ENCODE measurements at regions of chr1 and their contacts with region 1.

Region 1: DNA sequence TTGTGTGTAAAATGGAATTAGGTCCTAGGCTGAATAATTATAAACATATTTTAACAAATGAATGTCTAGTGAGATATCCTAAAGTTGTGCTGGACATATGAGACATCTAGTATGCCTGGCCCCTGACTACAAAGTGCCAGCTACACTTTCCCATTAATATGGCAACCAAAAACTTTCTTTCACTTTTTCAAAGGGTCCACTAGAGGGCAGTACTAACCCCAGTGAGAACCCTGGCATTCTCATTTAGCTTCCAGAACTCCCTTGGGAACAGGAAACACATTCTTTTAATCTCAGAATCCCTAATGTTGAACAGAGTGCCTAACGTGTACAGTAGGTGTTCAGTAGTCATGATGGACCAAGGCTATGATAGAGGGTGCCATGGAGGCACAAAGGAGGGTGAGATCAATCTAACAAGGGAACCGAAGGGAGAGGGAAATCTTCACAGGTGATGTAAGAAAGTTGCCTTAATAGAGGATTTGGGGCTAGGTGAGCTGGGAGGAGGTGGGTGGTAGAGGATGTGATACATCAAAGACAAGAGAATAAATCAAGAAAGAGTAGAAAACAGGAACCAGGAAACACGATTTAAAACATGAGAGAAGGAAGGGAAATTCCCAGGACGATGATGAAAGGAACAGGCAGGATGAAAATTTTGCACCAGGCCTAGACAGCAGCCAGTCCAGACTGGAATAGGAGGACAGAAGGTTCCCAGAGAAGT is 41.6 kb downstream of the NSL1 start:
- DNase-seq: peak in 2 of 9 experiments; percentile 48 to 61
- ATAC-seq: peak; percentile 42
- H3K4me3 ChIP-seq: no peak overlapping the region
- H3K4me3 Mint-ChIP-seq: no peak overlapping the region
- H3K27ac ChIP-seq: peak overlapping the region in 1 of 2 experiments; percentile 32
- H3K27ac Mint-ChIP-seq: peak overlapping the region; percentile 58
- H3K4me1 ChIP-seq: peaks cover 42% of the 10 kb centered on the region
- H3K4me1 Mint-ChIP-seq: peaks cover 49% of the 10 kb centered on the region
- H3K27me3 ChIP-seq: no peaks in the 10 kb centered on the region
- H3K27me3 Mint-ChIP-seq: no peaks in the 10 kb centered on the region
- CTCF ChIP-seq: peak; percentile 75

Region 2: DNA sequence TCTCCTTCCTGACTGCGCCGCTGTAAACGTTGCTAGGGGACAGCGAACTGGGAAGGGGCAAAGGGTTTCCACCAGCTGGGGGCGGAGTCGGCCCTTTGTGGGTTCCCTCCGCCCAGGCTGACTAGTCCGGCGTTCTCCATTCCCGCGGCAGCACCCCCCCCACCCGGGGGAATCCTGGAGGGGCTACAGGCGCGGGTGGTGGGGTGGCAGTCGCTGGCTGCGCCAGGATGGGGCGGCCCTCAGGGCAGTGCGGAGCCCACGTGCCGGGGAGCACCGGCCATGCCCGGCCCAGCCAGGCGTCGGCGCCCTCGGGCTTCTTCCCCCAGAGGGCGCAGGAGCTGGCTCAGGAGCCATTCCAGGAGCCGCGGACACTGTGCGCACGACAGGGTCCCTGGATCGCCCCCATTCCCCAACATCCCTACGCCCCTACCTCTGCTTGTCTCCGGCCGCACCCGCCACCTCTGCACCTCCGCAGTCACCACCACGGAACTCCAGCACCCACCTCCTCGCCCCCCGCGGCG is 50.8 kb before region 1 on chr1:
- CTCF ChIA-PET with region 1: interaction called, 3 read pairs
- POLR2A ChIA-PET with region 1: no interaction called
- intact Hi-C with region 1: loop called (anchors 2 to 5 kb)
- DNase-seq: peak in 7 of 9 experiments; percentile 13 to 73 (median 48)
- ATAC-seq: peak; percentile 55
- H3K4me3 ChIP-seq: peak overlapping the region; percentile 54
- H3K4me3 Mint-ChIP-seq: peak overlapping the region; percentile 88
- H3K27ac ChIP-seq: no peak overlapping the region
- H3K27ac Mint-ChIP-seq: peak overlapping the region; percentile 46
- H3K4me1 ChIP-seq: peaks cover 13% of the 10 kb centered on the region
- H3K4me1 Mint-ChIP-seq: peaks cover 34% of the 10 kb centered on the region
- H3K27me3 ChIP-seq: peaks cover 0 to 5% of the 10 kb centered on the region in 2 experiments
- H3K27me3 Mint-ChIP-seq: peaks cover 3% of the 10 kb centered on the region
- CTCF ChIP-seq: peak; percentile 48

Region 3: GRCh38 chr1:212738330-212738729 is 11.6 kb before region 1 on chr1:
- CTCF ChIA-PET with region 1: interaction called, 3 read pairs
- POLR2A ChIA-PET with region 1: interaction called, 4 read pairs
- intact Hi-C with region 1: loop called in 1 of 2 experiments (anchors 2 kb)
- DNase-seq: peak in 1 of 9 experiments; percentile 19
- ATAC-seq: no peak
- H3K4me3 ChIP-seq: no peak overlapping the region
- H3K4me3 Mint-ChIP-seq: no peak overlapping the region
- H3K27ac ChIP-seq: no peak overlapping the region
- H3K27ac Mint-ChIP-seq: no peak overlapping the region
- H3K4me1 ChIP-seq: no peaks in the 10 kb centered on the region
- H3K4me1 Mint-ChIP-seq: peaks cover 8% of the 10 kb centered on the region
- H3K27me3 ChIP-seq: no peaks in the 10 kb centered on the region
- H3K27me3 Mint-ChIP-seq: no peaks in the 10 kb centered on the region
- CTCF ChIP-seq: no peak

Region 4: DNA sequence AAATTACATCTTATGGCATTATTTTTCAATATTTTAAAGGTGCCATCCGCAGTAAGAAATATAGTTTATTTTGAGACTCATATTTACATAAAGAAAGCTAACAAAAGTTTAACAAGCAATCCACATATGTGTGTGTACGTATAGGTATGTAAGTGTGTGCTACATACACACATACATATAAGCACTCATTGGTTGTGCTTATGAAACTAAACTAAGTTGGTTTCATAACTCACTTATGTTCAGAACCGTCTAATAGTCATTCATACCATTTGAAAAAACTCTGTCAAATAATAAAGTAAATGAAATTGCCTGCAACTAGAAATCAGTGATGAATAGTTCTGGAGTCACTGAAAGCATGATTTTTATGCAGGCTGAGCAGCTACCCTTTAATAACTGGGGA is 55.8 kb after region 1 on chr1:
- CTCF ChIA-PET with region 1: no interaction called
- POLR2A ChIA-PET with region 1: no interaction called
- intact Hi-C with region 1: no loop called
- DNase-seq: no peak
- ATAC-seq: no peak
- H3K4me3 ChIP-seq: no peak overlapping the region
- H3K4me3 Mint-ChIP-seq: no peak overlapping the region
- H3K27ac ChIP-seq: no peak overlapping the region
- H3K27ac Mint-ChIP-seq: no peak overlapping the region
- H3K4me1 ChIP-seq: no peaks in the 10 kb centered on the region
- H3K4me1 Mint-ChIP-seq: no peaks in the 10 kb centered on the region
- H3K27me3 ChIP-seq: no peaks in the 10 kb centered on the region
- H3K27me3 Mint-ChIP-seq: no peaks in the 10 kb centered on the region
- CTCF ChIP-seq: no peak

Measured in CD8-positive, alpha-beta T cell (primary cell).